ENCODE measurements at regions of chr17 and their contacts with region 1.

Region 1: GRCh38 chr17:40358323-40359038 is 6.1 kb downstream of the GJD3 start:
- DNase-seq: peak; percentile 65 to 94 (median 84)
- ATAC-seq: peak; percentile 53 to 58 (median 57)
- H3K4me3 ChIP-seq: no peak overlapping the region
- H3K4me3 Mint-ChIP-seq: no peak overlapping the region
- H3K27ac ChIP-seq: no peak overlapping the region
- H3K27ac Mint-ChIP-seq: peak overlapping the region in 1 of 2 donors; percentile 61
- H3K4me1 ChIP-seq: peaks cover 0 to 19% of the 10 kb centered on the region in 2 experiments
- H3K4me1 Mint-ChIP-seq: peaks cover 0 to 19% (median 19%) of the 10 kb centered on the region in 3 donors
- H3K27me3 ChIP-seq: peaks cover 0 to 25% of the 10 kb centered on the region in 2 experiments
- H3K27me3 Mint-ChIP-seq: peaks cover 13 to 14% of the 10 kb centered on the region in 2 donors

Region 2: DNA sequence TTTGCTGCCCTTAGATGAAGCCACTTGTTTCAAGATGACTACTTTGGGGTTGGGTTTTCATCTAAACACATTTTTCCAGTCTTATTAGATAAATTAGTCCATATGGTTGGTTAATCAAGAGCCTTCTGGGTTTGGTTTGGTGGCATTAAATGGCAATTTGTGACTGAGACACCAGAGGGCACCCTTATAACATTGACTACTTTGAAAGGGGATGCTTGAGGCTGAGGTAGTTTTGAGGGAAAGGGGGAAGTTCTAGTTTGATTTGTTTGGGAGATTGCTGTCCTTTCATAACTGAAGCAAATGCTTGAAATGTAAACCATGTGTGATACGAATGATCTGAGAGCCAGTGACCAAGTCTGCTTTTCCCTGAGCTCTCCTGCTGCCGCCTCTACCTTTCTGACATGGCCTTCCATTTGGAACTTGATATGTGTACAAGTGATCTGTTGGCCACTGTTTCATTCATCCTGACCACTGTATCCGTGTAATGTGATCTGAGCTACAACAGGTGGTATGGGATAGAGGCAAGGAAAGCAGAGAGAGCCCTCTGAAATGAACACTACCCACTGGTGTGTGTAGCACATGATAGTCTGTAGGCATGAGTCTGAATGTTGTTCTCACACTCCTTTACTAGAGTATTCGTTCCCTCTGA is 55.3 kb before region 1 on chr17:
- CTCF ChIA-PET with region 1: interaction called, 17 to 69 read pairs
- POLR2A ChIA-PET with region 1: interaction called in 1 of 2 experiments, 10 read pairs
- DNase-seq: peak in 19 of 35 experiments; percentile 33 to 83 (median 53)
- ATAC-seq: peak in 3 of 4 experiments; percentile 58 to 62 (median 60)
- H3K4me3 ChIP-seq: no peak overlapping the region
- H3K4me3 Mint-ChIP-seq: no peak overlapping the region
- H3K27ac ChIP-seq: no peak overlapping the region
- H3K27ac Mint-ChIP-seq: no peak overlapping the region
- H3K4me1 ChIP-seq: peaks cover 28 to 31% of the 10 kb centered on the region in 2 experiments
- H3K4me1 Mint-ChIP-seq: peaks cover 14 to 16% (median 15%) of the 10 kb centered on the region in 3 donors
- H3K27me3 ChIP-seq: no peaks in the 10 kb centered on the region
- H3K27me3 Mint-ChIP-seq: no peaks in the 10 kb centered on the region

Region 3: DNA sequence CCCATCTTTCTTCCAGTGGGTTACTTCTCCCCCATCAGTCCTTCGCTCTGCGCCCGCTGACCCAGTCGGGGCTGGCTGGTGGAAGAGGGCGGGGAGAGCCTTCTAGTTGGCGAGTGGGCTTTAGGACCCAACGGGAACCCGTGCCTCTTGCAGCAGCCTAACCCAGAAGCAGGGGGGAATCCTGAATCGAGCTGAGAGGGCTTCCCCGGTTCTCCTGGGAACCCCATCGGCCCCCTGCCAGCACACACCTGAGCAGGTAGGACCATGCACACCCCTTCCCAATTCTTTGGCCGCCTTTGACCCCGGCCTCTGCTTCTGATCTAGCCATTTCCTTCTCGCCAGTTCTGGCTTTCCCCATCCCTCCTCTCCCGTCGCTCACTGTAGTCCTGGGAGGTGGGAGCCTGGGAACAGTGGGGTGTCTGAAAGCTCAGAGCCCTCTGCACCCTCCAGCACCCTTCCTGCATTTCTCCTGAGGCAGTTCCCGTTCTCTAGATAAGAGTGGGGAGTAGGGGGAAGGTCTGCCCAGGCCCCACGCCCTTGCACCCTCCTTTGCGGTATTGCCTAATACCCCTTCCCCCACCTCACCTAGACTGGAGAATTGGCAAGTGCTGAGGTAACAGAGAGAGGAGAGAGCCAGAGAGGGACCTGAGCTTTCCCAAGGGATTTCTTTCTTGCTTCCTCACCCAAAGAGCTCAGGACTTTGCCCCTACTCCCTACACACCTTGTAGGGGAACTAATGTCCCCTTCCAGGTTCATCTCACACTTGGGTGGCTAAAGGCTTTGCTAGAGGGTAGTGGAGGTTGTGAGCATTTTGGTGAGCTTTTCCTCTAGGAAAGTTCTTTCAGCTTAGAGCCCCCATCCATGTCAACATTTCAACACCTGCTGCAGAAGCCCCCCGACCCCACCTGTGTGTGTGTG is 49.2 kb before region 1 on chr17 and contains the start of gene RARA:
- CTCF ChIA-PET with region 1: interaction called, 3 to 69 read pairs
- POLR2A ChIA-PET with region 1: interaction called in 1 of 2 experiments, 3 read pairs
- DNase-seq: peak in 4 of 35 experiments; percentile 20 to 55 (median 42)
- ATAC-seq: peak; percentile 31 to 53 (median 34)
- H3K4me3 ChIP-seq: peak within 1 kb of the TSS; percentile 29 to 71
- H3K4me3 Mint-ChIP-seq: peak within 1 kb of the TSS in 1 of 3 donors; percentile 31
- H3K27ac ChIP-seq: peak within 1 kb of the TSS; percentile 1
- H3K27ac Mint-ChIP-seq: peak within 1 kb of the TSS; percentile 33 to 61
- H3K4me1 ChIP-seq: peaks cover 41 to 74% of the 10 kb centered on the region in 2 experiments
- H3K4me1 Mint-ChIP-seq: peaks cover 9 to 33% (median 32%) of the 10 kb centered on the region in 3 donors
- H3K27me3 ChIP-seq: no peaks in the 10 kb centered on the region
- H3K27me3 Mint-ChIP-seq: no peaks in the 10 kb centered on the region
- total RNA-seq, gene RARA: 46.8 to 90.7 (median 69.1) TPM

Region 4: GRCh38 chr17:40340880-40341807 is 17.3 kb before region 1 on chr17:
- CTCF ChIA-PET with region 1: interaction called in 1 of 2 experiments, 11 read pairs
- POLR2A ChIA-PET with region 1: no interaction called
- DNase-seq: peak; percentile 61 to 94 (median 88)
- ATAC-seq: peak; percentile 79 to 82 (median 81)
- H3K4me3 ChIP-seq: peak overlapping the region; percentile 67 to 72
- H3K4me3 Mint-ChIP-seq: peak overlapping the region; percentile 74 to 82 (median 77)
- H3K27ac ChIP-seq: peak overlapping the region; percentile 84
- H3K27ac Mint-ChIP-seq: peak overlapping the region; percentile 86 to 92
- H3K4me1 ChIP-seq: peaks cover 65 to 89% of the 10 kb centered on the region in 2 experiments
- H3K4me1 Mint-ChIP-seq: peaks cover 74 to 80% (median 78%) of the 10 kb centered on the region in 3 donors
- H3K27me3 ChIP-seq: no peaks in the 10 kb centered on the region
- H3K27me3 Mint-ChIP-seq: no peaks in the 10 kb centered on the region

Region 5: DNA sequence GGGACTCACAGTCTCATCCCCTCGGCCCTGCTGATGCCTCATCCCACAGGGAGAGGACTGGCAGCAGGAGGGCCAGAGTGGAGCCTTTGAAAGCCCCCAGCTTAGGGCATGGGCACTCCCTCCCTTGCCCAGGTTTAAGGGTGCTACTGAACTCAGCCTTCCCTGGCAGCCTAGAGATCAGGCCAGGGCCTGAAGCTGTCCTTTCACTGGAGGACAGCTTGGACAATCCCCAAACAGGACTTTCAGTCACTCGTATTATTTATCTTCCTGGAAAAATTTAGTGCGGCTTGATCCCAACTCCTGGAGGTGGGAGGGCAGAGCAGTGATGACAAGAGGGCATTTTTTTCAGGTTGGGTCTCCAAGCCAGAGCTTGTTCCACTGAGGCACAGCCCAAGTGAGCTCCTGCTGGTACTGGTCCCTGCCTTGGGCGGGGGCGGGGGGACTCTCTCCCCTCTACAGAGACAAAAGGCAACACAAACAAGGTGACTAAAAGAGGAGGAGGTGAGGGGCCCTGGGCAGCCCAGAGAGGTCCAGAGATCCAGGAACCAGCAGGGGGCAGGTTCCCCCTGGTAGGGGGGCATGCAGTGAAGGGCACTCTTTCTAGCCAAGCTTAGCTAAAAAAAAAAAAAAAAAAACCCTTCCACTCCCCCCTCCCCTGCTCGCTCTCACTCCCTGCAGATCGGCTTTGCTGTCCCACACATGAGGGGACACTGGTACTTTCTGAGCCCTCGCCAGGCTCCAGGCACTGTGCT is 1738.1 kb after region 1 on chr17:
- CTCF ChIA-PET with region 1: interaction called in 1 of 2 experiments, 10 read pairs
- POLR2A ChIA-PET with region 1: no interaction called
- DNase-seq: no peak
- ATAC-seq: no peak
- H3K4me3 ChIP-seq: no peak overlapping the region
- H3K4me3 Mint-ChIP-seq: no peak overlapping the region
- H3K27ac ChIP-seq: no peak overlapping the region
- H3K27ac Mint-ChIP-seq: no peak overlapping the region
- H3K4me1 ChIP-seq: peaks cover 6 to 16% of the 10 kb centered on the region in 2 experiments
- H3K4me1 Mint-ChIP-seq: peaks cover 6 to 10% (median 9%) of the 10 kb centered on the region in 3 donors
- H3K27me3 ChIP-seq: peaks cover 0 to 43% of the 10 kb centered on the region in 2 experiments
- H3K27me3 Mint-ChIP-seq: peaks cover 22 to 31% of the 10 kb centered on the region in 2 donors